Esophagus muscularis mucosa (tissue), 4 donors: ENCODE measurements at regions of chr14 and their contacts with region 1.

Region 1: DNA sequence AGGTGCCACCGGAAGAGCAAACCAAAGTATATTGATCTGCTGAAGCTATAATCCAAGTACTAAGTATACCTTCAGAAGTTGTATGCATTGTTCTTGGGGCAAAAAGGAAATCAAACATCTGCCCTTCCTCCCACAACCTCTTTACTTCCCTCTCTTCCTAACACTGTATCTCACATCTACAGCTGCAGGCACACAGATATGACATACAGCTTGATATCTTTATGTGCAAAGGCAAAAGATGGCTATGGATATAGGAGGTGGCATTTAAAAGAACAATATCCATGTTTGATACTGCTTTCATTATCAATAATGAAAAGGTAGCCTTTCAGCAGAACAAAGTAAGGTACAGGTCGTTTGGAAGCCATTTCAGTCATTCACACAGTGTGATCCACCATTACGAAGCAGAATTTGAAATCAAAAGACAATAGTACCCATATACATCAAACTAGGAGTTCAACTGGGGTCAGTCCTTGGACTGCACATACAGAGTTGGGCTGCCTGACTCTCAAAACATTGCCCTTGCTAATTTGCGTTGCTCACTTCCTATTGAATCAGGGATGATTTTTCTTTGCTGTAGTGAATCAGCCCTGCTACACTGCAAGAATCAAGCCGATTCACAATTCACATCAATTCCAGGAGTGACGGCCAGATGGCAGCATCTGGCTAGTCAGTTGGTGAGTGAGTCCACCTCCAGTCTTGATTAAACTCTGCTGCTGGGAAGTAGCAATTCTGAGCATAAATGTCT is 8.9 kb downstream of the ANG start:
- DNase-seq: no peak
- H3K4me3 ChIP-seq: no peak overlapping the region
- H3K27ac ChIP-seq: no peak overlapping the region
- H3K4me1 ChIP-seq: no peaks in the 10 kb centered on the region
- H3K27me3 ChIP-seq: no peaks in the 10 kb centered on the region
- CTCF ChIP-seq: peak; percentile 53 to 61 (median 54)
- EP300 ChIP-seq: no peak
- POLR2A ChIP-seq: no peak

Region 2: DNA sequence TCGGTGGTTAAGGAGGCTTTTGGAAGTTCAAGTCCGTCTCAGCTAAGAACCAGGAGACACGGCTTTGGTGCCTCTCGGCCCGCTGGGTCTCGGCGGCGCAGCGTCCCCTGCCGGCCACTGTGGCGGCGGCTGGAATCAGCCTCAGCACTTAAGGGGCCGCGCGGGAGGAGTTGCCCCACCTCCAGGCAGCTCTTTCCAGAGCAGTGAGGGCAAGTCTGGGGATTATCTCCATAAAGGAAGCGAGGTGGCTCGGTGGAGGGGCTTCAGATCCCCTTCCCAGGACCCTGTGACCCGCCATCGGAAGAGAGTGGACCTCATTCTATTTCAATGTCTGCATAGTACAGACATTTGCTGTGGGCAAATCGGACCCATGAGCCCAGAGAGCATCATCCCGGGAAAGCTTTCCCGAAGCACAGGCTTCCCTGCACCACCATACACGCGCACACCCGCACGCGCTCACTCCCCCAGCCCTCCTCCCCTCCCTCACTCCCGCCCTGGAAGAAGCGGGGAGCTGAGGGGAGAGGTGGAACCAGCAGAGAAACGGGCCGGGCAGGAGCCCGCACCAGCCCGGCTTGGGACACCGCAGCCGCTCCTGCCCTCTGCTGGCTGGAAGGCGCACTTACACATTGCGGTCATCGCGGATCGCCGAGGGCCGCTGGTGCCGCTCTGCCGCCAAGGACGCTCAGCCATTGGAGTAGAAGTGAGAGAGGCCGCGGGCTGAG is 273.7 kb after region 1 on chr14:
- intact Hi-C with region 1: loop called (anchors 5 kb)
- DNase-seq: peak; percentile 97
- H3K4me3 ChIP-seq: peak overlapping the region; percentile 54 to 71 (median 68)
- H3K27ac ChIP-seq: peak overlapping the region; percentile 68 to 82 (median 76)
- H3K4me1 ChIP-seq: peaks cover 4 to 15% (median 11%) of the 10 kb centered on the region in 4 donors
- H3K27me3 ChIP-seq: no peaks in the 10 kb centered on the region
- CTCF ChIP-seq: peak; percentile 66 to 88 (median 74)
- EP300 ChIP-seq: no peak
- POLR2A ChIP-seq: no peak